Tibial artery (tissue), 4 donors: ENCODE measurements at regions of chr12 and their contacts with region 1.

Region 1: GRCh38 chr12:14845350-14845750 is 2.0 kb upstream of the ART4 start:
- DNase-seq: peak; percentile 64 to 65
- H3K4me3 ChIP-seq: no peak overlapping the region
- H3K27ac ChIP-seq: peak overlapping the region; percentile 49 to 80
- H3K4me1 ChIP-seq: peaks cover 0 to 87% (median 42%) of the 10 kb centered on the region in 4 donors
- H3K27me3 ChIP-seq: no peaks in the 10 kb centered on the region
- CTCF ChIP-seq: peak; percentile 66 to 87

Region 2: GRCh38 chr12:14454098-14454907 is 391.0 kb before region 1 on chr12:
- intact Hi-C with region 1: no loop called
- DNase-seq: no peak
- H3K4me3 ChIP-seq: no peak overlapping the region
- H3K27ac ChIP-seq: no peak overlapping the region
- H3K4me1 ChIP-seq: peaks cover 0 to 4% (median 0%) of the 10 kb centered on the region in 4 donors
- H3K27me3 ChIP-seq: no peaks in the 10 kb centered on the region
- CTCF ChIP-seq: no peak

Region 3: GRCh38 chr12:14885718-14886221 is 40.4 kb after region 1 on chr12 and contains the start of gene MGP:
- intact Hi-C with region 1: loop called (anchors 5 kb)
- DNase-seq: peak; percentile 81 to 90
- H3K4me3 ChIP-seq: peak within 1 kb of the TSS; percentile 54 to 58
- H3K27ac ChIP-seq: peak within 1 kb of the TSS; percentile 81 to 87
- H3K4me1 ChIP-seq: peaks cover 0 to 34% (median 11%) of the 10 kb centered on the region in 4 donors
- H3K27me3 ChIP-seq: no peaks in the 10 kb centered on the region
- CTCF ChIP-seq: peak in 1 of 2 experiments; percentile 13

Region 4: GRCh38 chr12:14989790-14990189 is 144.4 kb after region 1 on chr12:
- intact Hi-C with region 1: loop called (anchors 5 kb)
- DNase-seq: no peak
- H3K4me3 ChIP-seq: no peak overlapping the region
- H3K27ac ChIP-seq: no peak overlapping the region
- H3K4me1 ChIP-seq: peaks cover 0 to 8% (median 0%) of the 10 kb centered on the region in 4 donors
- H3K27me3 ChIP-seq: no peaks in the 10 kb centered on the region
- CTCF ChIP-seq: no peak

Region 5: GRCh38 chr12:14995583-14996425 is 150.5 kb after region 1 on chr12:
- intact Hi-C with region 1: loop called (anchors 5 kb)
- DNase-seq: no peak
- H3K4me3 ChIP-seq: no peak overlapping the region
- H3K27ac ChIP-seq: peak overlapping the region in 1 of 2 donors; percentile 3
- H3K4me1 ChIP-seq: peaks cover 0 to 31% (median 11%) of the 10 kb centered on the region in 4 donors
- H3K27me3 ChIP-seq: no peaks in the 10 kb centered on the region
- CTCF ChIP-seq: peak; percentile 41 to 80